ENCODE measurements at regions of chr12 and their contacts with region 1.

Region 1: DNA sequence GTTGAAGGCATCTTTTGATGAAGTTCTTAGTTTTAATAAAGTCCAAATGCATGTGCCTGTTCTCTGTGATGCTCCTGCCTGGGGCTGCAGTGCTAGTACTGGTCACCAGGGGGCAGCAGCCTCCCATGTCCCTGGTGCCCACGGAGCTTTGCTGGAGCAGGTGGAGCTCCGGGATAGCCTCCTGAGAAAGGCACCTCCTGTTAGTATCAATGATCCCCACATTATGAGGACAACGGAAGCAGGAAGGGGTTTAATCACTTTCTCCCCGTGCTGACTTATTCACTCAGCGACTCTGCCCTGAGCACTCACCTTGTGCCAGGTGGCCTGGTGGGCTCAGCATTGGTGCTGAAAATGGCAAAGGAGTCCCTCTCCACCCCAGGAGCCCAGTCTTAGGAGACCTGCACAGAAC is 123.0 kb upstream of the PZP start:
- DNase-seq: no peak
- H3K4me3 ChIP-seq: no peak overlapping the region
- CTCF ChIP-seq: peak; percentile 96

Region 2: GRCh38 chr12:9347328-9348127 is 16.3 kb after region 1 on chr12:
- CTCF ChIA-PET with region 1: interaction called, 36 read pairs
- POLR2A ChIA-PET with region 1: no interaction called
- DNase-seq: no peak
- H3K4me3 ChIP-seq: no peak overlapping the region
- CTCF ChIP-seq: no peak

Region 3: DNA sequence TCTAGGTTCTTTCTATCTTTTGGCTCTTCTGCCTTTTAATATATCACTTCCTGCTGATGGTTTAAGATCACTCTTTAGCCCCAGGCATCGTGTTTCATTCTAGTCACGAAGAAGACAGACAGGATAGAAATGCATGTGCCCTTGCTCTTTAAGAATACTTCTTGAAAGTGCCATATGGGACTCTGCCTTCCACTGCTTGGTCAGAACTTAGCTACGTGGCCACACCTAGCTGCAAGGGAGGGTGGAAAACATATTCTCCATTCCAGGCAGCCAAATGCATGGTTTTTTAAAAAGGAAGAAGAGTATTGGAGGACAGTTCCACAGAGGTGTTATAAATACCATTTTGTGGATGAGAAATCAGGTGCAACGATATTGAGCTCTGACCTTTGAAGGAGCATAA is 133.2 kb after region 1 on chr12:
- CTCF ChIA-PET with region 1: interaction called, 31 read pairs
- POLR2A ChIA-PET with region 1: no interaction called
- DNase-seq: no peak
- H3K4me3 ChIP-seq: no peak overlapping the region
- CTCF ChIP-seq: no peak

Region 4: GRCh38 chr12:9699898-9700605 is 368.8 kb after region 1 on chr12:
- CTCF ChIA-PET with region 1: no interaction called
- POLR2A ChIA-PET with region 1: no interaction called
- DNase-seq: no peak
- H3K4me3 ChIP-seq: no peak overlapping the region
- CTCF ChIP-seq: no peak